ENCODE measurements at regions of chr12 and their contacts with region 1.

Region 1: DNA sequence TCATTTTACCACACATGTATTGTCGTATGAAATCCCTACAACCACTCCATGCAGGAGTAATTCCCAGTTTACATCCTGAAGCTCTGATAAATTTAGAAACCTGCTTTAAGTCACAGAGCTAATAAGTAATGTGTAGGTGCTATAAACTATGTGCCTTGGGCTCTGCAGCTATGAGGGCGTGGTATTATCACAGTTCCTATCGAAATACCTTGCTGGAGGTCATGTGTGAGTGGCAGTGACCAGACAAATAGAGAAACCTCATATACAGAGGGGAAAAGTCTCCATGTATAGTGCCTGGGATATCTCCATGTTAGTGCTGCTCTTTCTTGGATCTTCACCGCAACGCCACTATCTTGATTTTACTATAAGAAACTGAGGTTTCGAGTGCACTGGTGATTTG is 883 bp upstream of the TBC1D15 start:
- DNase-seq: no peak
- H3K4me3 ChIP-seq: peak overlapping the region; percentile 73
- H3K4me3 Mint-ChIP-seq: peak overlapping the region; percentile 96
- H3K27ac Mint-ChIP-seq: peak overlapping the region; percentile 99
- H3K4me1 ChIP-seq: 0 out of 2 replicates have a peak, but pooled peaks cover 9% of the 10 kb centered on the region
- H3K4me1 Mint-ChIP-seq: peaks cover 6% of the 10 kb centered on the region
- H3K27me3 ChIP-seq: no peaks in the 10 kb centered on the region
- H3K27me3 Mint-ChIP-seq: no peaks in the 10 kb centered on the region
- CTCF ChIP-seq: no peak

Region 2: GRCh38 chr12:71392521-71393145 is 446.0 kb before region 1 on chr12:
- CTCF ChIA-PET with region 1: no interaction called
- POLR2A ChIA-PET with region 1: no interaction called
- intact Hi-C with region 1: no loop called
- DNase-seq: peak in 1 of 2 experiments; percentile 34
- H3K4me3 ChIP-seq: no peak overlapping the region
- H3K4me3 Mint-ChIP-seq: no peak overlapping the region
- H3K27ac Mint-ChIP-seq: no peak overlapping the region
- H3K4me1 ChIP-seq: no peaks in the 10 kb centered on the region
- H3K4me1 Mint-ChIP-seq: no peaks in the 10 kb centered on the region
- H3K27me3 ChIP-seq: no peaks in the 10 kb centered on the region
- H3K27me3 Mint-ChIP-seq: peaks cover 3% of the 10 kb centered on the region
- CTCF ChIP-seq: peak; percentile 61 to 75

Region 3: DNA sequence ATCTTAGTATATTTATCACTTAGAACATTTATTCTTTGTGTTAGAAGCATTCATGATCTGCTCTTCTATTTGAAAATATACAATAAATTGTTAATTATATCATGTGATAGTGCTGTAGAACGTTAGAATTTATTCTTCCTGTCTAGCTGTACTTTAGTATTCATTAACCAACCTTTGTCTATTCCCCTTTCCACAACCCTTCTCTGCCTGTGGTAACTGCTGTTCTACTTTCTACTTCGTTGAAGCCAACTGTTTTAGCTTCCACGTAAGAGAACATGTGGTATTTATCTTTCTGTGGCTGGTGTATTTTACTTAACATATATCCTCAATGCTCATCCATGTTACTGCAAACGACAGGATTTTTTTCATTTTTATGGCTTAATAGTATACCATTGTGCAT is 19.0 kb after region 1 on chr12:
- CTCF ChIA-PET with region 1: no interaction called
- POLR2A ChIA-PET with region 1: no interaction called
- intact Hi-C with region 1: no loop called
- DNase-seq: no peak
- H3K4me3 ChIP-seq: no peak overlapping the region
- H3K4me3 Mint-ChIP-seq: no peak overlapping the region
- H3K27ac Mint-ChIP-seq: no peak overlapping the region
- H3K4me1 ChIP-seq: no peaks in the 10 kb centered on the region; the same call in 1 of the 2 replicates
- H3K4me1 Mint-ChIP-seq: no peaks in the 10 kb centered on the region
- H3K27me3 ChIP-seq: no peaks in the 10 kb centered on the region
- H3K27me3 Mint-ChIP-seq: no peaks in the 10 kb centered on the region
- CTCF ChIP-seq: no peak

Region 4: GRCh38 chr12:71938728-71939385 is 100.2 kb after region 1 on chr12 and contains the start of gene TPH2:
- CTCF ChIA-PET with region 1: no interaction called
- POLR2A ChIA-PET with region 1: no interaction called
- intact Hi-C with region 1: loop called (anchors 2 kb)
- DNase-seq: peak; percentile 83 to 90
- H3K4me3 ChIP-seq: no peak within 1 kb of the TSS
- H3K4me3 Mint-ChIP-seq: no peak within 1 kb of the TSS
- H3K27ac Mint-ChIP-seq: no peak within 1 kb of the TSS
- H3K4me1 ChIP-seq: no peaks in the 10 kb centered on the region
- H3K4me1 Mint-ChIP-seq: no peaks in the 10 kb centered on the region
- H3K27me3 ChIP-seq: no peaks in the 10 kb centered on the region
- H3K27me3 Mint-ChIP-seq: peaks cover 16% of the 10 kb centered on the region
- CTCF ChIP-seq: peak; percentile 81 to 85
- total RNA-seq, gene TPH2: not detected in 2 replicates

Region 5: GRCh38 chr12:72511906-72512305 is 673.2 kb after region 1 on chr12:
- CTCF ChIA-PET with region 1: no interaction called
- POLR2A ChIA-PET with region 1: no interaction called
- intact Hi-C with region 1: no loop called
- DNase-seq: no peak
- H3K4me3 ChIP-seq: no peak overlapping the region
- H3K4me3 Mint-ChIP-seq: no peak overlapping the region
- H3K27ac Mint-ChIP-seq: no peak overlapping the region
- H3K4me1 ChIP-seq: no peaks in the 10 kb centered on the region
- H3K4me1 Mint-ChIP-seq: no peaks in the 10 kb centered on the region
- H3K27me3 ChIP-seq: no peaks in the 10 kb centered on the region
- H3K27me3 Mint-ChIP-seq: no peaks in the 10 kb centered on the region
- CTCF ChIP-seq: no peak

Measured in Caco-2 (cell line).